Mammary epithelial cell (primary cell): ENCODE measurements at regions of chr5 and their contacts with region 1.

Region 1: DNA sequence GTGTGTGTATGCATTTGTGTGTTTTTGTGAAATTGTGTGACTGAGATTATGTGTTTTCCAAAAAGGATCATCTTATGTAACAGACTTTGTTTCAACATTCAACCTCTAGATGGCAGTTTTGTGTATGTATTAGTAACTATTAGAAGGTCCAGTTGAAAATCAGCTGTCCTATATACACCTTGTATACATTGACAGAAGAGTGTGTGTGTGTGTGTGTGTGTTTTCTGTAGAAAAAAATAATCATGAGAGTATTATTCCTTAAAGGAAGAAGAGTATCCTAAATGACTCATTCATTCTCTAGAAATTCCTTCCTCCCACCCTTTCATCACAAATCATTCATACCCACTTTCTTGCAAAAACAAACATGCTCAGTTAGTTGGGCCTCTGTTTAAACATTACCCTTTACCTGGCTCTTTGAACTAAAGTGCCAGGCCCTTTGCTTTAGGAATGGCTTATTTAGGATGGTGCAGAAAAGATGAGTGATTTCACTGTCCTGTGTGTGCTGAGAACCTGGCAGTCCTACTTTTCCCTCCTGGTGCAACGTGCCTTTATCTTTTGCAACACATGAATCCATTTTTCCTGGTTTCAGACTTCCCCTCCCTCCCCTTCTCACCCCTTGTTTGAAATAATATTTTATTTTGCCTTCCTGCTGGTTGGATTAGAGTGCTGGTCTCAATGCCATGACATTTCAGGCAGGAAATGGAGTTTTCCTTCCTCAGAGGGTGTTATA is 152.2 kb downstream of the ARHGAP26 start:
- DNase-seq: no peak
- H3K4me3 ChIP-seq: no peak overlapping the region
- H3K27ac ChIP-seq: no peak overlapping the region
- H3K4me1 ChIP-seq: peaks cover 14% of the 10 kb centered on the region
- H3K27me3 ChIP-seq: no peaks in the 10 kb centered on the region
- CTCF ChIP-seq: peak; percentile 32 to 41

Region 2: GRCh38 chr5:142959683-142960657 is 37.6 kb after region 1 on chr5:
- CTCF ChIA-PET with region 1: no interaction called
- dilution Hi-C with region 1: no loop called
- in situ Hi-C with region 1: no loop called
- intact Hi-C with region 1: loop called (anchors 2 kb)
- DNase-seq: peak; percentile 88
- H3K4me3 ChIP-seq: no peak overlapping the region
- H3K27ac ChIP-seq: peak overlapping the region; percentile 70
- H3K4me1 ChIP-seq: peaks cover 20% of the 10 kb centered on the region
- H3K27me3 ChIP-seq: no peaks in the 10 kb centered on the region
- CTCF ChIP-seq: no peak

Region 3: DNA sequence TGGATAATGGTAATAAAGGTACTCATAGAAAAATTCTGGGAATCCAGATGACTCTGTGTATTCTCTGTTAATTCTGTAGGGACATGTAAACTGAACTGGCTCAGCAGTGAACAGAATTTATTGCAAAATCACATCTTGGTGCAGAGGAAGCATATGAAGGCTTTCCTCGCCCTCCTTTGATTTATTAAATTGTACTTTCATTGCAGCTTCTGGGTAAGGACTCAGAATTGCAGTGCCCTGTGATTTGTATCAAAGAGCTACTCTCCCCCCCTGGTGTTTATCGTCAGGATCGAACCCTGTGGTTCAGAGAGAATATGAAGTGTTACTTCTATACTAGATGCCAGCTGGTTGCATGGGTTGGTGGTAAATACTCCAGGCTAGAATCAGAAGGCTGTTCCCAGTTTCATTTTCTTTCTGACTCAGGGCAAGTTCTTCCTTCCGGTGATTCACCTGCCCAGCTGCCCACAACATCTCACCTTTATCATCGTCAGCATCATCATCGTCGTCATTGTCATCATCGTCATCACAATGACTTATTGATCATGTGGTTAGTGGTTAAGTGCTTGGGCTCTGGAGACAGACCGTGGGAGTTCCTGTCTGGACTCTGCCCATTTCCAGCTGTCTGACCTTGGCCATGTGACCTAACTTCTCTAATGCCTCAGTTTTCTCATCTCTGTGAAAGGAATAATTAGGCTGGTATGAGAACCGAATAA is 86.6 kb after region 1 on chr5:
- CTCF ChIA-PET with region 1: no interaction called
- dilution Hi-C with region 1: no loop called
- in situ Hi-C with region 1: loop called in 1 of 2 experiments (anchors 10 kb)
- intact Hi-C with region 1: loop called (anchors 5 kb)
- DNase-seq: peak; percentile 100
- H3K4me3 ChIP-seq: no peak overlapping the region
- H3K27ac ChIP-seq: peak overlapping the region; percentile 91
- H3K4me1 ChIP-seq: peaks cover 25% of the 10 kb centered on the region
- H3K27me3 ChIP-seq: no peaks in the 10 kb centered on the region
- CTCF ChIP-seq: peak in 1 of 2 donors; percentile 6

Region 4: DNA sequence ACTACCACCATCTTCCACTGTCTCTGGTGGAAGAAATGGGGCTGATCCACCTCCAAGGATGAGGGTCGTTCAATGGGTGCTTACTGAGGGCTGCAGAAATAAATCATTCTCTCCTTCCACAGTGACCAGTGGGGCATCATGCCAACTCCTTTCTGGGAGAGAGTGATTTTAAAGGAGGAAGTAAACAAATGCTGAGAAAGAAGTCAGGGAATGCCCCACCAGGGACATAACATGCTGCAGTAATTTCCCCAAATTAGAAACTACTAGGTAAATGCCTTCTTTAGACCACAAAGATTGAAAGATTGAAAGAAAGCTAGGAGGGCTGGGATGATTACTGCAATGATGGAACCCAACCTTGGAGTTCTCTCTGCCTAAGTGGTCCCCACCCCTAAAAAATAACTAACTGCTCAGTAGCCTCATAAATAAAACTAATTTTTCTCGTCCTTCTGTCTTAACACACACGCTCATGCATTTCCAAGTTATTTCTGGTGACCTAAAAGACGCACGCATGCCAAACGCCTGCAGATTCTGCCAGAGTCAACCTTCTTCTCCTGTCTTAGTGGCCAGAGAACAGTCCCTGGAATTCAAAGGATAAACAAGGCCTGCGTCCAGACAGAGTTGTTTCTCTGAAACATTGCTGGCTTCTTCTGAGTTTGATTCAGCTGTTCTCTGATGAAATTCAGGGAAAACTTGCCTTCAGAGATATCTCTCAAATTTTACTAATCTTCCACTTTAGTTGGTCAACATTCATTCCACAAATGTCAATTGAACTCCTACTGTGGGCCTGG is 231.1 kb after region 1 on chr5:
- CTCF ChIA-PET with region 1: no interaction called
- dilution Hi-C with region 1: no loop called
- in situ Hi-C with region 1: no loop called
- intact Hi-C with region 1: loop called (anchors 10 kb)
- DNase-seq: no peak
- H3K4me3 ChIP-seq: no peak overlapping the region
- H3K27ac ChIP-seq: no peak overlapping the region
- H3K4me1 ChIP-seq: peaks cover 26% of the 10 kb centered on the region
- H3K27me3 ChIP-seq: no peaks in the 10 kb centered on the region
- CTCF ChIP-seq: no peak

Region 5: DNA sequence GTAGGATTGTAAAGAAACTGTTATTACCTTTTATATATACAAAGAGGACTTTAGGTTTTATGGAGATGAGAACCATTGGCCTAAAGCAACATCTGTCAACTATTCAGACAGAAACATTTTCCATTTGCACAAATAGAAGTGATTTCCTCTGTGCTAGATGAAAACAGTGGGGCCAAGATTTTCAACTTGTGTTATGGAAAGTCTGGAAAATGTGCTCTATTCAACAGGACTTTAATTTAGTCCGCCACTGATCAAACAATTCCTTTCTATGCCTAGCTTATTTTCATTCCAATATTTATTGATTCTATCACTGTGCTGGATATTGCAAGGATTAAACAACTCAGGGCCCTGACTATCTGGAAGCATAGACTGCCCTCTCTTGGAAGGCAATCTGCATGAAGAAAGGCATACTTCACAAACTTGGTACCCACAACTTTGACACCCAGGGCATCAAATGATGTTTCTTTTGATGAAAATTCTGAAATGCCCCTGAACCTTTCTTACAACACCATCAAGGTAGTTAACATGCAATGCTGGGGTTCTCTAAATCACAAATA is 762.9 kb after region 1 on chr5:
- CTCF ChIA-PET with region 1: no interaction called
- dilution Hi-C with region 1: no loop called
- in situ Hi-C with region 1: no loop called
- intact Hi-C with region 1: loop called (anchors 5 kb)
- DNase-seq: no peak
- H3K4me3 ChIP-seq: no peak overlapping the region
- H3K27ac ChIP-seq: no peak overlapping the region
- H3K4me1 ChIP-seq: no peaks in the 10 kb centered on the region
- H3K27me3 ChIP-seq: no peaks in the 10 kb centered on the region
- CTCF ChIP-seq: peak; percentile 27 to 63

Region 6: GRCh38 chr5:144183254-144183889 is 1261.0 kb after region 1 on chr5:
- CTCF ChIA-PET with region 1: no interaction called
- dilution Hi-C with region 1: no loop called
- in situ Hi-C with region 1: no loop called
- intact Hi-C with region 1: loop called (anchors 5 kb)
- DNase-seq: peak; percentile 41
- H3K4me3 ChIP-seq: no peak overlapping the region
- H3K27ac ChIP-seq: no peak overlapping the region
- H3K4me1 ChIP-seq: peaks cover 8% of the 10 kb centered on the region
- H3K27me3 ChIP-seq: no peaks in the 10 kb centered on the region
- CTCF ChIP-seq: peak; percentile 62 to 73